ENCODE measurements at regions of chr14 and their contacts with region 1.

Region 1: DNA sequence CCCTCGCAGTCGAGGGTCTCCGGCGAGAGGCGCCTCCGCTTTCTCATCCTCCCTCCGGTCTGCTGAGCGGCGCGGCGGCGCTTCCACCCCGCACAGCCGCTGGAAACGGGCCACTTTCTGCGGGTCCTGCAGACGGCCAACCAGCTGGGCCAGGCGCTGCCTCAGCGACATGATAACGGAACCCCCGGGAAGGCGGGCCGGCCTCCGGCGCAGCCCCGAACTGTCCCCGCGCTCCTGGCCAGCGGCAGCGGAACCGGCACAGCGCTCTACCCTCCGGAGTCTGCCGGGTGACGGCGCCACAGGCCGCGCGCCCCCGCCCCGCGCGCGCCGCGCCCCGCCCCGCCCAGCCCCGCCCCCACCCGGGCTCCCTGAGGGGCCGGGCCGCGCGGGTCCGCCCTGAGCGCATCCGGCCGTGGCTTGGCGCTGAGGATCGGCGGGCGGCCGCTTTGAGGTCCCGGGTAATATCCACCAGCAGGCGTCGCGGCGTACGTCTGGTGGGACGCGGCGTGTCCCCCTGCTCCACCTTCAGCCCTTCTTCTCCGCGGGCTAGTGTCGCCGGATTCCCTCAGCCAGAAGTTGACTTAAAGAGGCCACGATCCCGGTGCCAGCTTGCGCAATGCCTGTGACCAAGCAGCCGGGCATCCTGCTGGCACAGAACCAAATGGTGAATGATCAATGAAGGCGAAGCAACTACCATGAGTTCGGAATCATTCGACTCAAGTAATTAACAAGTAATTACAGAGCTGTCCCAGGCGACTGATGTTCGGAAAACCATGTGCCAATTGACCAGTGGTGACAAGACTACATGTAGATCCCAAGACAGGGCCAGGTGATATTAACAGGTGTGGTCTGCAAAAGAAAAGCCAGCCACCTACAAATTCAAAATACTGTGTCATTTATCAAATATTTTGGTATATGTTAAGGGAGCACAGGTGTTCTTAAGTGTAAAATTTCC is at the start of gene SGPP1:
- DNase-seq: peak; percentile 79 to 91
- ATAC-seq: peak; percentile 90 to 97 (median 91)
- H3K4me3 ChIP-seq: peak within 1 kb of the TSS; percentile 93
- H3K4me3 Mint-ChIP-seq: peak within 1 kb of the TSS; percentile 99
- H3K27ac ChIP-seq: peak within 1 kb of the TSS; percentile 83
- H3K27ac Mint-ChIP-seq: peak within 1 kb of the TSS; percentile 90 to 94
- H3K4me1 ChIP-seq: peaks cover 15% of the 10 kb centered on the region
- H3K4me1 Mint-ChIP-seq: peaks cover 37 to 47% of the 10 kb centered on the region in 2 donors
- H3K27me3 ChIP-seq: no peaks in the 10 kb centered on the region
- H3K27me3 Mint-ChIP-seq: no peaks in the 10 kb centered on the region
- CTCF ChIP-seq: peak; percentile 30
- total RNA-seq, gene SGPP1: 17.8 to 23.4 (median 23.3) TPM

Region 2: GRCh38 chr14:63044994-63045611 is 682.9 kb before region 1 on chr14 and contains the start of gene KCNH5:
- intact Hi-C with region 1: no loop called
- DNase-seq: no peak
- ATAC-seq: no peak
- H3K4me3 ChIP-seq: no peak within 1 kb of the TSS
- H3K4me3 Mint-ChIP-seq: no peak within 1 kb of the TSS
- H3K27ac ChIP-seq: no peak within 1 kb of the TSS
- H3K27ac Mint-ChIP-seq: no peak within 1 kb of the TSS
- H3K4me1 ChIP-seq: no peaks in the 10 kb centered on the region
- H3K4me1 Mint-ChIP-seq: no peaks in the 10 kb centered on the region
- H3K27me3 ChIP-seq: peaks cover 16% of the 10 kb centered on the region
- H3K27me3 Mint-ChIP-seq: peaks cover 22 to 23% of the 10 kb centered on the region in 2 donors
- CTCF ChIP-seq: no peak
- total RNA-seq, gene KCNH5: not detected

Region 3: GRCh38 chr14:63641473-63642228 is 86.4 kb before region 1 on chr14 and contains the start of gene WDR89:
- intact Hi-C with region 1: loop called (anchors 2 kb)
- DNase-seq: peak; percentile 92 to 99
- ATAC-seq: peak; percentile 79 to 92 (median 81)
- H3K4me3 ChIP-seq: peak within 1 kb of the TSS; percentile 90
- H3K4me3 Mint-ChIP-seq: peak within 1 kb of the TSS; percentile 92
- H3K27ac ChIP-seq: peak within 1 kb of the TSS; percentile 99
- H3K27ac Mint-ChIP-seq: peak within 1 kb of the TSS; percentile 95 to 96
- H3K4me1 ChIP-seq: peaks cover 11% of the 10 kb centered on the region
- H3K4me1 Mint-ChIP-seq: peaks cover 22 to 28% of the 10 kb centered on the region in 2 donors
- H3K27me3 ChIP-seq: no peaks in the 10 kb centered on the region
- H3K27me3 Mint-ChIP-seq: no peaks in the 10 kb centered on the region
- CTCF ChIP-seq: peak; percentile 70
- total RNA-seq, gene WDR89: 9.6 to 13.4 (median 10.7) TPM

Region 4: DNA sequence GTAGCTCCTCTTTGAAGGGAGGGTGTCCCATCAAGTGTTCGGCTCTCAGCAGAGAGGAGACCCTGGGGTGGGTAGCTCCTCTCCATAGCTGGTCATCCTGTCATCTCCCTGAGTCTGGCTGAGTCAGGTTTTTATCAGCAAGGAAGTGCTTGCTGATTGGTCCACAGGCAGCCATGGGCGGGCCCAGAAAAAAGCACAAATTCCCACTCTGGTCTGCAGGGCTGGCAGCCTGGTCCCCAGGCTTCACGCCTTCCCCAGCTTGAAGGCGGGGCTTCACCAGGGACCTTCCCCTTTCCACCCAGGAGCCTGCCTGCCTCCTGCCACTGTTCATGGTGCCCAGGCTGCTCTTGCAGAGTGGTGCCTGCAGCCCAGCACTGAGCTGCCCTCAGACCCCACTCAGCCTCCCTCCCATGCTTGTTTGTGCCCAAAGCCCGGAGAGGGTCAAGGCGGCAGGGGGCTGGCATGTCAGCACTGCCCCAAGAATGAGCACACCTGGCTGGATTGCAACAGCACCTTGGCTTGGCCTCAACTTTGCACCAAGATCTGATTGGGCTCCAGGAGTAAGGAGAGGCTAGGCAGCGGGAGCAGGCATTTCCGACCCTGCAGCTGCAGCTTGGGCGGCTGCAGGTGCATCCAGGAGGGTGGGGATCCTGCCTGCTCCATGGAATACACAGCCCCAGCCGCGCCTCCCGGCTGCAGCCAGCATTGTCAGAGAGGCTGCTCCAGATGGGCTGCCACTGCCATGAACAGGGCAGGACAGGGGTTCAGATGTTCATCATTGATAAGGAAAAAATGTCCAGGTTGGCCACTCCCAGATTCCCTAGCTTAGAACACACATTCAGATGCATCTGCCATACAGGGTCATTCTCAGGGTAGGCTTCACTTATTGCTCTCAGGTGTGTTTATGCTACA is 64.4 kb before region 1 on chr14:
- intact Hi-C with region 1: no loop called
- DNase-seq: no peak
- ATAC-seq: peak in 2 of 3 donors; percentile 41 to 54
- H3K4me3 ChIP-seq: no peak overlapping the region
- H3K4me3 Mint-ChIP-seq: no peak overlapping the region
- H3K27ac ChIP-seq: no peak overlapping the region
- H3K27ac Mint-ChIP-seq: no peak overlapping the region
- H3K4me1 ChIP-seq: no peaks in the 10 kb centered on the region
- H3K4me1 Mint-ChIP-seq: no peaks in the 10 kb centered on the region
- H3K27me3 ChIP-seq: no peaks in the 10 kb centered on the region
- H3K27me3 Mint-ChIP-seq: no peaks in the 10 kb centered on the region
- CTCF ChIP-seq: no peak

Region 5: GRCh38 chr14:63682727-63683593 is 45.1 kb before region 1 on chr14:
- intact Hi-C with region 1: loop called (anchors 5 kb)
- DNase-seq: no peak
- ATAC-seq: no peak
- H3K4me3 ChIP-seq: no peak overlapping the region
- H3K4me3 Mint-ChIP-seq: no peak overlapping the region
- H3K27ac ChIP-seq: no peak overlapping the region
- H3K27ac Mint-ChIP-seq: no peak overlapping the region
- H3K4me1 ChIP-seq: no peaks in the 10 kb centered on the region
- H3K4me1 Mint-ChIP-seq: peaks cover 0 to 5% of the 10 kb centered on the region in 2 donors
- H3K27me3 ChIP-seq: no peaks in the 10 kb centered on the region
- H3K27me3 Mint-ChIP-seq: no peaks in the 10 kb centered on the region
- CTCF ChIP-seq: no peak

Region 6: GRCh38 chr14:63857466-63858030 is 129.5 kb after region 1 on chr14:
- intact Hi-C with region 1: no loop called
- DNase-seq: peak in 1 of 2 donors; percentile 77
- ATAC-seq: peak; percentile 33 to 51 (median 34)
- H3K4me3 ChIP-seq: no peak overlapping the region
- H3K4me3 Mint-ChIP-seq: peak overlapping the region; percentile 88
- H3K27ac ChIP-seq: peak overlapping the region; percentile 83
- H3K27ac Mint-ChIP-seq: peak overlapping the region; percentile 93 to 96
- H3K4me1 ChIP-seq: peaks cover 54% of the 10 kb centered on the region
- H3K4me1 Mint-ChIP-seq: peaks cover 66 to 70% of the 10 kb centered on the region in 2 donors
- H3K27me3 ChIP-seq: no peaks in the 10 kb centered on the region
- H3K27me3 Mint-ChIP-seq: no peaks in the 10 kb centered on the region
- CTCF ChIP-seq: no peak